ENCODE measurements at regions of chr11 and their contacts with region 1.

Region 1: GRCh38 chr11:3849297-3849874 is 6.1 kb upstream of the STIM1 start:
- DNase-seq: no peak
- H3K4me3 ChIP-seq: no peak overlapping the region
- H3K27ac ChIP-seq: no peak overlapping the region
- H3K4me1 ChIP-seq: peaks cover 3 to 17% (median 4%) of the 10 kb centered on the region in 4 donors
- H3K27me3 ChIP-seq: no peaks in the 10 kb centered on the region
- CTCF ChIP-seq: peak; percentile 64 to 76 (median 69)
- EP300 ChIP-seq: no peak
- POLR2A ChIP-seq: no peak

Region 2: GRCh38 chr11:3880724-3881123 is 31.3 kb after region 1 on chr11:
- in situ Hi-C with region 1: no loop called
- intact Hi-C with region 1: no loop called
- DNase-seq: no peak
- H3K4me3 ChIP-seq: no peak overlapping the region
- H3K27ac ChIP-seq: peak overlapping the region in 2 of 4 donors; percentile 28 to 50
- H3K4me1 ChIP-seq: peaks cover 26 to 48% (median 35%) of the 10 kb centered on the region in 4 donors
- H3K27me3 ChIP-seq: no peaks in the 10 kb centered on the region
- CTCF ChIP-seq: no peak
- EP300 ChIP-seq: no peak
- POLR2A ChIP-seq: no peak

Region 3: GRCh38 chr11:4044976-4045646 is 195.7 kb after region 1 on chr11:
- in situ Hi-C with region 1: no loop called
- intact Hi-C with region 1: no loop called
- DNase-seq: no peak
- H3K4me3 ChIP-seq: no peak overlapping the region
- H3K27ac ChIP-seq: peak overlapping the region in 1 of 4 donors; percentile 48
- H3K4me1 ChIP-seq: peaks cover 0 to 16% (median 0%) of the 10 kb centered on the region in 4 donors
- H3K27me3 ChIP-seq: no peaks in the 10 kb centered on the region
- CTCF ChIP-seq: no peak
- EP300 ChIP-seq: no peak
- POLR2A ChIP-seq: no peak

Region 4: GRCh38 chr11:4065601-4066377 is 216.4 kb after region 1 on chr11:
- in situ Hi-C with region 1: loop called (anchors 5 to 10 kb)
- intact Hi-C with region 1: no loop called
- DNase-seq: no peak
- H3K4me3 ChIP-seq: no peak overlapping the region
- H3K27ac ChIP-seq: no peak overlapping the region
- H3K4me1 ChIP-seq: peaks cover 12 to 65% (median 27%) of the 10 kb centered on the region in 4 donors
- H3K27me3 ChIP-seq: no peaks in the 10 kb centered on the region
- CTCF ChIP-seq: no peak
- EP300 ChIP-seq: no peak
- POLR2A ChIP-seq: no peak

Region 5: GRCh38 chr11:4072668-4073285 is 223.4 kb after region 1 on chr11:
- in situ Hi-C with region 1: loop called (anchors 5 to 10 kb)
- intact Hi-C with region 1: loop called (anchors 2 kb)
- DNase-seq: peak; percentile 57
- H3K4me3 ChIP-seq: no peak overlapping the region
- H3K27ac ChIP-seq: peak overlapping the region in 2 of 4 donors; percentile 10 to 17
- H3K4me1 ChIP-seq: peaks cover 0 to 26% (median 11%) of the 10 kb centered on the region in 4 donors
- H3K27me3 ChIP-seq: no peaks in the 10 kb centered on the region
- CTCF ChIP-seq: peak; percentile 80 to 94 (median 83)
- EP300 ChIP-seq: no peak
- POLR2A ChIP-seq: no peak